Testis (tissue), 5 donors: ENCODE measurements at regions of chr16 and their contacts with region 1.

Region 1: GRCh38 chr16:67339453-67339852 is 12.8 kb downstream of the LRRC36 start:
- DNase-seq: no peak
- H3K4me3 ChIP-seq: no peak overlapping the region
- H3K27ac ChIP-seq: no peak overlapping the region
- H3K4me1 ChIP-seq: no peaks in the 10 kb centered on the region
- H3K27me3 ChIP-seq: no peaks in the 10 kb centered on the region
- CTCF ChIP-seq: no peak
- POLR2A ChIP-seq: no peak

Region 2: DNA sequence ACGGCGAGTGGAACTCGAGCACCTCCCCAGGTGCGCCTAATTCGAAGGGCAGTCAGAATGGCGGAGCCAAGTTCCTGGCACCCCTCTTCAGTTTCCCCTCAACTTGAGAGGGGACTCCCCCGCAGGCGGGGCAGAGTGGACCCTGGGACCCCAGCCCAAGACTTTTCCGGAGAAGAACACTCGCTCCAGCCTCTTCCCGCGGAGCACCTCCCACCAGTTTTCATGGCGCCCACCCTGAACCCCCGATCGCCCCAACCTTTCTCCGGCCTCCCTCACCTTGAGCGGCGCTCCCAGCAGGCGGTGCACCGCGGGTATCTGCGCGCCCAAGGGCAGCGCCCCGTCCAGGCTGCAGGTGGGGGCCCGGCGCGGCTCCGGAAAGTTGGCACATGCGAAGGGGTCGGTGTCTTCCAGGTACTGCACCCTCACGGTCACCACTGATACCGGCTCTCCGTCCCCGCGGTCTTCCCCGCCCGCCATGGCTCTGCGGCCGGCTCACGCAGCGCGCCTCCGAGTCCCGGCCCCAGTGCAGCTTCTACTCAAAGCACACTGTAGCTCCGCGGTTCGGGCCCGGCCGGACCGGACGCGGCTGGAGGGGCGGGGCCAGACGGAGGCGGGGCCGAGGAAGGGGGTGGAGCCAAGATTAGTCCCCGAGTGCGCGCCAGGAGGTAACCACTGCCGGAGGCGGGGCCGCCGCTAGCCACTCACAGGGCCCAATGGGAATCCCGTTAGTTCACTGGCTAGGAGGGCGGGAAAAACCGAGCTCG is 92.3 kb before region 1 on chr16 and contains the start of gene FHOD1:
- intact Hi-C with region 1: no loop called
- DNase-seq: peak; percentile 98
- H3K4me3 ChIP-seq: peak within 1 kb of the TSS; percentile 74 to 76
- H3K27ac ChIP-seq: peak within 1 kb of the TSS; percentile 68 to 87
- H3K4me1 ChIP-seq: peaks cover 31% of the 10 kb centered on the region
- H3K27me3 ChIP-seq: no peaks in the 10 kb centered on the region
- CTCF ChIP-seq: peak in 1 of 3 experiments; percentile 24
- POLR2A ChIP-seq: peak; percentile 9
- total RNA-seq, gene FHOD1: 28.8 to 40.0 TPM

Region 3: GRCh38 chr16:67279296-67280089 is 60.0 kb before region 1 on chr16 and contains the start of gene PLEKHG4:
- intact Hi-C with region 1: loop called (anchors 10 kb)
- DNase-seq: peak; percentile 75
- H3K4me3 ChIP-seq: peak within 1 kb of the TSS; percentile 65 to 67
- H3K27ac ChIP-seq: peak within 1 kb of the TSS in 1 of 2 donors; percentile 61
- H3K4me1 ChIP-seq: peaks cover 17% of the 10 kb centered on the region
- H3K27me3 ChIP-seq: no peaks in the 10 kb centered on the region
- CTCF ChIP-seq: peak; percentile 54 to 87 (median 70)
- POLR2A ChIP-seq: no peak
- total RNA-seq, gene PLEKHG4: 86.5 to 137 TPM

Region 4: DNA sequence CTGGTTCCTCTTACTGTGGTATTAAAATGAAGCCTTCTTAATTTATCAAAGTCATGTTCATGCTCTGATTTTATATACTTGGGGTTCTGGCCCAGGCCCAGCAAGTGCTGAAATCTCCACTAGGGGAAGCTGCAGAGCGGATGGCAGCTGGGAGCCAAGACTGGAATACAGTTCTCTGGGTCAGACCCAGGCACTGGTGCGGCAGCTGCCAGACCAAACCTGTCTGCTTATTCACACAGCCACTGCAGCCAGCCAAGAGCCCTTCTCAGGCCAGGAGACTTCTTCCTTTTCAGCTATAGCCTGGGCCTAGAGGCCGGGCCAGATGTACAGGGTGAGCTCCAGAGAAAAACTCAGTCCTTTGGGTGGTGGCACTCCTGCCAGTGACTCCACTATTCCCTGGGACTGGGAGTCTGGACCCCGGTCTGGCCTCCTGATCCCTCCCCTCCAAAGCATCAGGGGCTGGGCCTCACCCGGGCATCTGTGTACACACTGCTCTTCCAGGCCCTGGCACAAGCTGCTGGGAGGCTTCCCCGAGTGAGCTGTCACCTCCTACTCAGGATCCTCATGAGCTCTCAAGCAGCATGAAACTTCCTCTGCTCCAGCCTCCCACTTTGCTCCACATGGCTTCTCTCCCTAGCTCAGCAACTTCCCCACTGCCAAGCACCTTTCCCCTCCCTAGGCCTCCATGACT is 117.1 kb after region 1 on chr16:
- intact Hi-C with region 1: no loop called
- DNase-seq: peak; percentile 32
- H3K4me3 ChIP-seq: no peak overlapping the region
- H3K27ac ChIP-seq: peak overlapping the region in 1 of 2 donors; percentile 64
- H3K4me1 ChIP-seq: peaks cover 67% of the 10 kb centered on the region
- H3K27me3 ChIP-seq: no peaks in the 10 kb centered on the region
- CTCF ChIP-seq: peak; percentile 12 to 39 (median 37)
- POLR2A ChIP-seq: no peak

Region 5: GRCh38 chr16:67466581-67466980 is 127.1 kb after region 1 on chr16:
- intact Hi-C with region 1: no loop called
- DNase-seq: no peak
- H3K4me3 ChIP-seq: no peak overlapping the region
- H3K27ac ChIP-seq: no peak overlapping the region
- H3K4me1 ChIP-seq: peaks cover 49% of the 10 kb centered on the region
- H3K27me3 ChIP-seq: no peaks in the 10 kb centered on the region
- CTCF ChIP-seq: no peak
- POLR2A ChIP-seq: no peak